Mammary epithelial cell (primary cell): ENCODE measurements at regions of chr2 and their contacts with region 1.

Region 1: DNA sequence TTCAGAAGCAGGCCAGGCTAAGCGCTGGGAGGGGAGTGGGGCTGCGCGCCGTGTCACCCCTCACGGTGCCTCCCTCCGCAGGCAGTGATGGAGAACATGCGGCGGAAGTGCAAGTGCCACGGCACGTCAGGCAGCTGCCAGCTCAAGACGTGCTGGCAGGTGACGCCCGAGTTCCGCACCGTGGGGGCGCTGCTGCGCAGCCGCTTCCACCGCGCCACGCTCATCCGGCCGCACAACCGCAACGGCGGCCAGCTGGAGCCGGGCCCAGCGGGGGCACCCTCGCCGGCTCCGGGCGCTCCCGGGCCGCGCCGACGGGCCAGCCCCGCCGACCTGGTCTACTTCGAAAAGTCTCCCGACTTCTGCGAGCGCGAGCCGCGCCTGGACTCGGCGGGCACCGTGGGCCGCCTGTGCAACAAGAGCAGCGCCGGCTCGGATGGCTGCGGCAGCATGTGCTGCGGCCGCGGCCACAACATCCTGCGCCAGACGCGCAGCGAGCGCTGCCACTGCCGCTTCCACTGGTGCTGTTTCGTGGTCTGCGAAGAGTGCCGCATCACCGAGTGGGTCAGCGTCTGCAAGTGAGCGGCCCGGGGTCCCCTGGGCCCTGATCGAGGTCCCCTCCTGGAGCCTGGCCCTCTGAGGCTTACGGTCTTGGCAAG is 12.2 kb downstream of the WNT10A start:
- DNase-seq: peak; percentile 53
- H3K4me3 ChIP-seq: peak overlapping the region in 2 of 3 experiments; percentile 36 to 40
- H3K27ac ChIP-seq: peak overlapping the region; percentile 10
- H3K4me1 ChIP-seq: peaks cover 55% of the 10 kb centered on the region
- H3K27me3 ChIP-seq: no peaks in the 10 kb centered on the region
- CTCF ChIP-seq: peak; percentile 33 to 60

Region 2: GRCh38 chr2:218820746-218821369 is 72.0 kb before region 1 on chr2:
- CTCF ChIA-PET with region 1: no interaction called
- dilution Hi-C with region 1: loop called (anchors 5 kb)
- in situ Hi-C with region 1: no loop called
- intact Hi-C with region 1: no loop called
- DNase-seq: no peak
- H3K4me3 ChIP-seq: no peak overlapping the region
- H3K27ac ChIP-seq: no peak overlapping the region
- H3K4me1 ChIP-seq: no peaks in the 10 kb centered on the region
- H3K27me3 ChIP-seq: peaks cover 3% of the 10 kb centered on the region
- CTCF ChIP-seq: no peak

Region 3: DNA sequence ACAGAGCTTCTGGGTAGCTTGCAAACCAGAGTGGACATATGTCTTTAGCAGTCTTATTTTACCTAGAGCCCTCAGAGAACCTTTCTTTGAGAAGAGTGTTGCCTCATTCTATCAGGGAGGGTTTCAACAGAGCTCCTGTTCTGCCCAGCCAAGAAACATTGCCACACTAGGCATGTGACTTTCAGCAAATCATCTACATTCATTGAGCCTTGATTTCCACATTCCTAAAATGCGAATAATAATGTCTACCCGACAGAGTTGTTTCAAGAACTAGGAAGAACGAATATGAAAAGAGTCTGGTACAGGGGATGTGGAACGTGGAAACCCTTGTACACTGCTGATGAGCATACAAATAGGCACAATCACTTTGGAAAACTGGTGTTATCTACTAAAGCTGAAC is 53.4 kb before region 1 on chr2:
- CTCF ChIA-PET with region 1: no interaction called
- dilution Hi-C with region 1: no loop called
- in situ Hi-C with region 1: no loop called
- intact Hi-C with region 1: no loop called
- DNase-seq: peak; percentile 23
- H3K4me3 ChIP-seq: no peak overlapping the region
- H3K27ac ChIP-seq: no peak overlapping the region
- H3K4me1 ChIP-seq: peaks cover 7% of the 10 kb centered on the region
- H3K27me3 ChIP-seq: no peaks in the 10 kb centered on the region
- CTCF ChIP-seq: no peak

Region 4: GRCh38 chr2:219726916-219727315 is 834.1 kb after region 1 on chr2:
- CTCF ChIA-PET with region 1: no interaction called
- dilution Hi-C with region 1: no loop called
- in situ Hi-C with region 1: no loop called
- intact Hi-C with region 1: no loop called
- DNase-seq: no peak
- H3K4me3 ChIP-seq: no peak overlapping the region
- H3K27ac ChIP-seq: no peak overlapping the region
- H3K4me1 ChIP-seq: peaks cover 13% of the 10 kb centered on the region
- H3K27me3 ChIP-seq: no peaks in the 10 kb centered on the region
- CTCF ChIP-seq: peak; percentile 13 to 16